ENCODE measurements at regions of chr3 and their contacts with region 1.

Region 1: GRCh38 chr3:184335661-184336546 is 1.5 kb upstream of the FAM131A start:
- DNase-seq: peak; percentile 69 to 79
- ATAC-seq: peak; percentile 53 to 60
- H3K4me3 ChIP-seq: peak overlapping the region; percentile 75 to 90 (median 82)
- H3K27ac ChIP-seq: peak overlapping the region; percentile 98 to 99 (median 98)
- H3K4me1 ChIP-seq: peaks cover 38 to 47% of the 10 kb centered on the region in 2 donors
- H3K27me3 ChIP-seq: no peaks in the 10 kb centered on the region
- CTCF ChIP-seq: no peak
- POLR2A ChIP-seq: peak; percentile 92 to 93

Region 2: GRCh38 chr3:183306798-183307671 is 1028.9 kb before region 1 on chr3:
- in situ Hi-C with region 1: no loop called
- intact Hi-C with region 1: loop called (anchors 10 kb)
- DNase-seq: peak; percentile 71 to 90
- ATAC-seq: peak; percentile 76
- H3K4me3 ChIP-seq: peak overlapping the region in 1 of 4 donors; percentile 21
- H3K27ac ChIP-seq: peak overlapping the region; percentile 89 to 99 (median 93)
- H3K4me1 ChIP-seq: peaks cover 49 to 67% of the 10 kb centered on the region in 2 donors
- H3K27me3 ChIP-seq: no peaks in the 10 kb centered on the region
- CTCF ChIP-seq: no peak
- POLR2A ChIP-seq: peak; percentile 9 to 53

Region 3: GRCh38 chr3:184320099-184320445 is 15.8 kb before region 1 on chr3:
- in situ Hi-C with region 1: no loop called
- intact Hi-C with region 1: loop called (anchors 2 kb)
- DNase-seq: peak; percentile 96 to 98
- ATAC-seq: peak; percentile 69 to 74
- H3K4me3 ChIP-seq: peak overlapping the region; percentile 52 to 66 (median 55)
- H3K27ac ChIP-seq: peak overlapping the region; percentile 92 to 100 (median 98)
- H3K4me1 ChIP-seq: peaks cover 81 to 86% of the 10 kb centered on the region in 2 donors
- H3K27me3 ChIP-seq: no peaks in the 10 kb centered on the region
- CTCF ChIP-seq: no peak
- POLR2A ChIP-seq: no peak

Measured in gastrocnemius medialis (tissue), 4 donors.